H1 (cell line): ENCODE measurements at regions of chr17 and their contacts with region 1.

Region 1: GRCh38 chr17:17890773-17891759 is 54.3 kb upstream of the SREBF1 start:
- DNase-seq: no peak
- H3K4me3 ChIP-seq: no peak overlapping the region
- H3K27ac ChIP-seq: no peak overlapping the region
- H3K4me1 ChIP-seq: peaks cover 3 to 6% (median 4%) of the 10 kb centered on the region in 4 experiments
- H3K27me3 ChIP-seq: no peaks in the 10 kb centered on the region
- CTCF ChIP-seq: peak; percentile 88 to 94 (median 92)
- EP300 ChIP-seq: no peak
- POLR2A ChIP-seq: no peak
- RAD21 ChIP-seq: peak; percentile 87 to 92

Region 2: DNA sequence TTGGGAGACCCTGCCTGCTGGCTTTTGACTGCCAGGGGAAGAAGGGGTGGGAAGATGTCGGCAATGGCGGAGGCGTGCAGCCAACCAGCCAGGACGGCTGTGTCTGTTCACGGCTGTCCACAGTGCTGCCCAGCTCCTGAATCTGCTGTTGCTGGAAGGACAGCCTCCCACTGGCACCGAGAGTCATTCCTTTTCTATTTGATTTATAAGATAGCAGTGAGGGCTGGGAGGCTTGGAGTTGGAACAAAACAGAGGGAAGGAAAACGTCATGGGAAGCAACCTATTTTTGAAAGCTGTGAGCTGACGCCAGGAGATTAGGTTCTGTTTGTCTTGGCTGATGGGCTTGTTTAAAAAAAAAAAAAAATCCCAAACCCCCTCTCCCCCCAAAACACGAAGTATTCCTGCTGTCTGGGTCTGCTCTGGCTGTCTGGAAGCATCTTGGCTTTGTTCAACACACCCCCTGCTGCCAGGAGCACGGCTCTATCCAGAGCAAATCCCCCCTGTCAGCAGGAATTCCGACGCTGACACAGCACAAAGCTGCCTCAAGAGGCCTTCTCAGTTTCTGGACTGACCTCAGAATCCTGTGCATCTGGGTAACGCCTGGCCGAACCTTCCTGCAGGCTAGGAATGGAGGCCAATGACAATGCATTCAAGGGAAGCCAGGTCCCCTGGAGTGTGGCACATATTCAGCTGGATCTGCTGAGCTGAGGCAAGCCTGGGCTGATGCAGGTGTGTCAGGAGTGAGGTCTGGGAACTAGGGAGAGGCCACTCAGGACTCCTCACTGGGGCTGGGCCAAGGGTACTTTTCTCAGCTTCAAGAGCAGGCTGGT is 13.3 kb before region 1 on chr17:
- CTCF ChIA-PET with region 1: interaction called, 404 read pairs
- POLR2A ChIA-PET with region 1: interaction called, 7 read pairs
- DNase-seq: no peak
- H3K4me3 ChIP-seq: no peak overlapping the region
- H3K27ac ChIP-seq: no peak overlapping the region
- H3K4me1 ChIP-seq: peaks cover 11 to 28% (median 18%) of the 10 kb centered on the region in 4 experiments
- H3K27me3 ChIP-seq: no peaks in the 10 kb centered on the region; a peak in 1 of 7 replicates
- CTCF ChIP-seq: 0 out of 4 replicates have a peak, but pooled peaks of 1 of the 3 experiments have one; percentile 6
- EP300 ChIP-seq: no peak
- POLR2A ChIP-seq: no peak
- RAD21 ChIP-seq: no peak

Region 3: GRCh38 chr17:17919169-17920107 is 28.4 kb after region 1 on chr17:
- CTCF ChIA-PET with region 1: interaction called, 50 read pairs
- POLR2A ChIA-PET with region 1: interaction called, 5 read pairs
- DNase-seq: peak in 1 of 2 experiments; percentile 75
- H3K4me3 ChIP-seq: no peak overlapping the region
- H3K27ac ChIP-seq: no peak overlapping the region
- H3K4me1 ChIP-seq: peaks cover 13 to 18% (median 16%) of the 10 kb centered on the region in 4 experiments
- H3K27me3 ChIP-seq: no peaks in the 10 kb centered on the region; a peak in 1 of 7 replicates
- CTCF ChIP-seq: peak; percentile 79 to 91 (median 86)
- EP300 ChIP-seq: no peak
- POLR2A ChIP-seq: no peak
- RAD21 ChIP-seq: peak; percentile 94 to 99

Region 4: DNA sequence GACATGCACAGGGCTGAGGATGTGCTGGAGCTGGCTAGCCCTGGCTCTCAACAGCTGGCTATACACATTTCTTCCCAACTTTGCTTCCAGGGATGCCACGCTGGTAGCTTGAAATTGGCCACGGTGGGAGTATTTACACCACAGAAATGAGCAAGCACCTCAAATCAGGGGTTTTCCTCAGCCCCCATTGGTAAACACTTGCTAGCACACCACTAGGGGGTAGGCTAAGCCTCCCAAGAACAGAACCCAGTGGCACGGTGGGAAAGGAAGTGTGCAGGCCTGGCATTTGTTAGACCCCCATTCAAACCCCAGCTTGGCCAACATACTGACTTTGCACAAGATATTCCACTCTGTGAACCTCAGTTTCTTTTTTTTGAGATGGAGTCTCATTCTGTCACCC is 94.5 kb after region 1 on chr17:
- CTCF ChIA-PET with region 1: interaction called, 23 read pairs
- POLR2A ChIA-PET with region 1: no interaction called
- DNase-seq: no peak
- H3K4me3 ChIP-seq: no peak overlapping the region
- H3K27ac ChIP-seq: no peak overlapping the region
- H3K4me1 ChIP-seq: no peaks in the 10 kb centered on the region; a peak in 1 of 7 replicates
- H3K27me3 ChIP-seq: no peaks in the 10 kb centered on the region; a peak in 1 of 7 replicates
- CTCF ChIP-seq: peak; percentile 39 to 53 (median 51)
- EP300 ChIP-seq: no peak
- POLR2A ChIP-seq: no peak
- RAD21 ChIP-seq: peak; percentile 44 to 60

Region 5: GRCh38 chr17:18004884-18005305 is 113.8 kb after region 1 on chr17:
- CTCF ChIA-PET with region 1: interaction called, 15 read pairs
- POLR2A ChIA-PET with region 1: no interaction called
- DNase-seq: peak in 1 of 2 experiments; percentile 57
- H3K4me3 ChIP-seq: no peak overlapping the region
- H3K27ac ChIP-seq: no peak overlapping the region
- H3K4me1 ChIP-seq: peaks cover 0 to 7% (median 0%) of the 10 kb centered on the region in 4 experiments; a peak in 1 of 7 replicates
- H3K27me3 ChIP-seq: no peaks in the 10 kb centered on the region
- CTCF ChIP-seq: peak; percentile 37 to 90 (median 70)
- EP300 ChIP-seq: no peak
- POLR2A ChIP-seq: no peak
- RAD21 ChIP-seq: peak; percentile 22 to 36; a peak in 3 of 4 replicates